CD4-positive, alpha-beta memory T cell (primary cell): ENCODE measurements at regions of chr1 and their contacts with region 1.

Region 1: DNA sequence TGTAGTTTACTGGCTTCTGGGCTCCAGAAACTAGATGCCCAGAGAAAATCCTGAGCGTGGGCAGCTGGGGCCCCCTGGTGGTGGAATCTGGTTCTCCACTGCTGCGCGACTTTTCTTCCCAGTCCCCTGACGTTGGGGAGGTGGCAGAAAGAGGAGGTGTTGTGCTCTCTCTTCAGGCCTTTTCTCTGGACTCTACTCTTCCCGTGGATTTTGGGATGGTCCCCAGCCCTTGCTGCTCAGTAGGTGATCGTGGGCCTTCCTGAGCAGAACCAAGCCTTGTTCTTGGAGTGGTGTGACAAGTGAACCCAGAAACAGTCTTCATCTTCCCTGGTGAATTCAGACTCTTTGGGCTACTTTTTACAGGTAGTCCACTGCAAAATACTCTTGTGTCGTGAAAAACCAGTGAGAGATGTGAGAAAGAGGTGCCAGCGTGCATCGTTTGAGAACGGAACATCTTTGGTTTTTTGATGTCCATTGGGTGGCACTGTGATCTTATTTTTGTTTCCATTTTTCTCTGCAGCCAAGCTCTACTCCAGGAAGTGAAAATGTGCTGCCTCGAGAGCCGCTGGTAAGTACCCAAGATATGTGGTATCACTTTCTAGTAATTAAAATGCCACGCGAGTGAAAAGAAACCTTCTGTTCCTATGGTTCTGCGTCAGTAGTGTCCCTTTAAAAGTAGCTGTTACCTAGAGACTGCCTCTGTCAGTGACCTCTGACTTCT is 20.2 kb downstream of the PEX14 start:
- DNase-seq: peak; percentile 71 to 75 (median 75)
- H3K4me3 ChIP-seq: peak overlapping the region; percentile 77 to 88
- H3K4me3 Mint-ChIP-seq: peak overlapping the region; percentile 82 to 92 (median 88)
- H3K27ac ChIP-seq: peak overlapping the region; percentile 53
- H3K27ac Mint-ChIP-seq: peak overlapping the region; percentile 58 to 96 (median 93)
- H3K4me1 ChIP-seq: peaks cover 21% of the 10 kb centered on the region
- H3K4me1 Mint-ChIP-seq: peaks cover 21 to 36% (median 29%) of the 10 kb centered on the region in 4 donors
- H3K27me3 ChIP-seq: no peaks in the 10 kb centered on the region
- H3K27me3 Mint-ChIP-seq: no peaks in the 10 kb centered on the region

Region 2: GRCh38 chr1:10378081-10378841 is 116.7 kb before region 1 on chr1:
- CTCF ChIA-PET with region 1: interaction called, 3 read pairs
- POLR2A ChIA-PET with region 1: no interaction called
- intact Hi-C with region 1: loop called (anchors 5 kb)
- DNase-seq: no peak
- H3K4me3 ChIP-seq: no peak overlapping the region
- H3K4me3 Mint-ChIP-seq: no peak overlapping the region
- H3K27ac ChIP-seq: no peak overlapping the region
- H3K27ac Mint-ChIP-seq: no peak overlapping the region
- H3K4me1 ChIP-seq: no peaks in the 10 kb centered on the region
- H3K4me1 Mint-ChIP-seq: peaks cover 0 to 1% (median 0%) of the 10 kb centered on the region in 4 donors
- H3K27me3 ChIP-seq: no peaks in the 10 kb centered on the region
- H3K27me3 Mint-ChIP-seq: no peaks in the 10 kb centered on the region

Region 3: DNA sequence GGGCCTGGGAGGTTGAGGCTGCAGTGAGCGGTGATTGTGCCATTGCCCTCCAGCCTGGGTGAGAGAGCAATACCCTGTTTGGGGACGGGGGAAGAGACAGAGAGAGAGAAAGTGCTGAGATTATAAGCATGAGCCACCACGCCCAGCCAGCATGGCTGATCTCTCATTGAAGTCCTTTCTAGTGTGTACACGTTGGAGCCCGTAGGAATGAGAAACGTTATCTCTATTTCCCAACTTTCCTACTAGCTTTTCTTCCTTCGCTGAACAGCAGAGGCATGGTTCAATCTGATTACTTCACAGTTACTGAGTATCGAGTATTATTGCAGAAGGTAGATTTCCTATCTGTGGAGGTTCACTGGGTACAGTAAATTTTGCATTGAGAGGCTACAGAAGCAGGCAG is 15.6 kb before region 1 on chr1:
- CTCF ChIA-PET with region 1: interaction called, 39 read pairs
- POLR2A ChIA-PET with region 1: interaction called, 3 read pairs
- intact Hi-C with region 1: no loop called
- DNase-seq: no peak
- H3K4me3 ChIP-seq: no peak overlapping the region
- H3K4me3 Mint-ChIP-seq: no peak overlapping the region
- H3K27ac ChIP-seq: no peak overlapping the region
- H3K27ac Mint-ChIP-seq: peak overlapping the region in 2 of 7 donors; percentile 10 to 81
- H3K4me1 ChIP-seq: peaks cover 20% of the 10 kb centered on the region
- H3K4me1 Mint-ChIP-seq: peaks cover 24 to 42% (median 33%) of the 10 kb centered on the region in 4 donors
- H3K27me3 ChIP-seq: no peaks in the 10 kb centered on the region
- H3K27me3 Mint-ChIP-seq: no peaks in the 10 kb centered on the region

Region 4: GRCh38 chr1:10507111-10507879 is 12.4 kb after region 1 on chr1:
- CTCF ChIA-PET with region 1: interaction called, 111 read pairs
- POLR2A ChIA-PET with region 1: interaction called, 28 read pairs
- intact Hi-C with region 1: loop called (anchors 1 kb)
- DNase-seq: peak; percentile 55 to 71 (median 56)
- H3K4me3 ChIP-seq: no peak overlapping the region
- H3K4me3 Mint-ChIP-seq: peak overlapping the region in 2 of 8 donors; percentile 33 to 72
- H3K27ac ChIP-seq: no peak overlapping the region
- H3K27ac Mint-ChIP-seq: peak overlapping the region; percentile 26 to 91 (median 74)
- H3K4me1 ChIP-seq: peaks cover 41% of the 10 kb centered on the region
- H3K4me1 Mint-ChIP-seq: peaks cover 31 to 53% (median 44%) of the 10 kb centered on the region in 4 donors
- H3K27me3 ChIP-seq: no peaks in the 10 kb centered on the region
- H3K27me3 Mint-ChIP-seq: no peaks in the 10 kb centered on the region

Region 5: DNA sequence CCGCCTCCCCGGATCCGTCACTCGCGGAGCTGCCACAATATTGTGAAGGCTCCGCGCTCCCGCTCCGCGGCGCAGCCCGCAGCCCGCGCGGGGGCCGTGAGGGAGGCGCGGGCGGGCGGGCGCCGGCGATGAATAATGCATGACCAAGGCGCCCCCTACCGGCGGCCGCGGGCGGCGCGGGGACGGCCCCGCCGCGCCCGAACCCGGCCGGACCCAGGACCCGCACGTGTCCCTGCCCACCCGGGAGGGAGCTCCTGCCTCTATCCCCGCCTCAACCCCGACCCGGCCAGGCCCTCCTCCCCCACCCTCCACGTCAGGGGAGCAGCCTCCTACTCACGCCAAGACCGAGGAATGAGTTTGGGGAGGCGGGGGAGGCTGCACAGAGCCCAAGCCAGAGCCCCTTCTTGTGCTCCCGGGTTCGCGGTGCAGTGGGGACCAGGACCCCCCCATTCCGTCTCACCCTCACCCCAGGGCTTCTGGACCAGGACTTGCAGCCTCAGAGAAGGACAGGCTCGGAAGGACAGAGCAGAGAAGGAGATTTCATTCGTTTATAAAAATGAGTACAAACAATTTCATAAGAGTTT is 372.3 kb after region 1 on chr1:
- CTCF ChIA-PET with region 1: interaction called, 45 read pairs
- POLR2A ChIA-PET with region 1: interaction called, 10 read pairs
- intact Hi-C with region 1: loop called (anchors 1 kb)
- DNase-seq: peak; percentile 58 to 67 (median 61)
- H3K4me3 ChIP-seq: peak overlapping the region in 1 of 2 donors; percentile 34
- H3K4me3 Mint-ChIP-seq: peak overlapping the region in 4 of 8 donors; percentile 32 to 80 (median 67)
- H3K27ac ChIP-seq: no peak overlapping the region
- H3K27ac Mint-ChIP-seq: peak overlapping the region in 1 of 7 donors; percentile 29
- H3K4me1 ChIP-seq: peaks cover 13% of the 10 kb centered on the region
- H3K4me1 Mint-ChIP-seq: peaks cover 4 to 18% (median 12%) of the 10 kb centered on the region in 4 donors
- H3K27me3 ChIP-seq: peaks cover 25% of the 10 kb centered on the region
- H3K27me3 Mint-ChIP-seq: peaks cover 26 to 55% of the 10 kb centered on the region in 2 donors

Region 6: GRCh38 chr1:10941891-10942541 is 447.1 kb after region 1 on chr1:
- CTCF ChIA-PET with region 1: interaction called, 7 read pairs
- POLR2A ChIA-PET with region 1: no interaction called
- intact Hi-C with region 1: loop called (anchors 1 kb)
- DNase-seq: peak; percentile 39 to 61 (median 47)
- H3K4me3 ChIP-seq: no peak overlapping the region
- H3K4me3 Mint-ChIP-seq: peak overlapping the region in 1 of 8 donors; percentile 59
- H3K27ac ChIP-seq: no peak overlapping the region
- H3K27ac Mint-ChIP-seq: no peak overlapping the region
- H3K4me1 ChIP-seq: peaks cover 29% of the 10 kb centered on the region
- H3K4me1 Mint-ChIP-seq: peaks cover 14 to 42% (median 20%) of the 10 kb centered on the region in 4 donors
- H3K27me3 ChIP-seq: no peaks in the 10 kb centered on the region
- H3K27me3 Mint-ChIP-seq: peaks cover 7 to 25% of the 10 kb centered on the region in 2 donors